Activated CD4-positive, alpha-beta memory T cell treated with anti-CD3 and anti-CD28 coated beads for 36 hours (primary cell): ENCODE measurements at regions of chr11 and their contacts with region 1.

Region 1: GRCh38 chr11:96012086-96012824 is 88.3 kb upstream of the MTMR2 start:
- DNase-seq: peak; percentile 59
- H3K4me3 Mint-ChIP-seq: peak overlapping the region; percentile 32
- H3K27ac Mint-ChIP-seq: peak overlapping the region; percentile 75
- H3K4me1 Mint-ChIP-seq: peaks cover 55% of the 10 kb centered on the region
- H3K27me3 Mint-ChIP-seq: no peaks in the 10 kb centered on the region

Region 2: DNA sequence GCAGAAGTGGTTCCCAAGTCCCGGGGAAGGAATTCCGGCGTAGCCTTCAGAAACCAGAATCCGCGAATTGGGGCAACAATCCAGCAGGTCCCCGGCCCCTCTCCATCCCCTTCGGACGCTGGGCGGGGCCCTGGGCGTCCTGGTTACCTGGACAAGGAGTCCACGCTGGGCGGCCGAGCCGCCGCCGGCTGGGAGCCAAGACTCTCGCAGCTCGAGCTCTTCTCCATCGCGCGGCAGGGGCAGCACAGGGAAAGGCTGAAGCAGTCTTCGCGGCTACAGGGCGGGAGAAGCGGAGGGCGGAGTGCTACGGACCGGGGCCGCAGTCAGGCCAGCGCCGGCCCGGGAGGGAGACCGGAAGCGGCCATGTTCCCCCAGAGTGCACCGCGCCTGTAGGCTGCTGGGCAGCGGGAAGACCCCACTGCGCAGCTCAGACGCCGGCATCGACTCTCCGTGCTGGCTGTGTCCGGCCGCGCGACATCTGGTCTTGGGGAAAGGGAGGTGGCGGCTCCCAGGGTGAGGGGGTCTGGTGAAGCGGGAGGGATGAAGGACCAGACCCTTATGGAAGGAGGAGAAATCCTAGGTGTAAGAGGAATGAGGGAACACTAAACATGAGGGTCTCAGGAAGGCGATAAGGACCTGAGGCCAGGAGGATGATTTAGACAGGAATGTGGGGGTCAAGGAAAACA is 88.4 kb before region 1 on chr11 and contains the start of gene MTMR2:
- CTCF ChIA-PET with region 1: no interaction called
- POLR2A ChIA-PET with region 1: no interaction called
- intact Hi-C with region 1: loop called (anchors 5 kb)
- DNase-seq: peak; percentile 72
- H3K4me3 Mint-ChIP-seq: peak within 1 kb of the TSS; percentile 100
- H3K27ac Mint-ChIP-seq: peak within 1 kb of the TSS; percentile 99
- H3K4me1 Mint-ChIP-seq: peaks cover 30% of the 10 kb centered on the region
- H3K27me3 Mint-ChIP-seq: no peaks in the 10 kb centered on the region
- total RNA-seq, gene MTMR2: 36.9 to 37.8 TPM

Region 3: DNA sequence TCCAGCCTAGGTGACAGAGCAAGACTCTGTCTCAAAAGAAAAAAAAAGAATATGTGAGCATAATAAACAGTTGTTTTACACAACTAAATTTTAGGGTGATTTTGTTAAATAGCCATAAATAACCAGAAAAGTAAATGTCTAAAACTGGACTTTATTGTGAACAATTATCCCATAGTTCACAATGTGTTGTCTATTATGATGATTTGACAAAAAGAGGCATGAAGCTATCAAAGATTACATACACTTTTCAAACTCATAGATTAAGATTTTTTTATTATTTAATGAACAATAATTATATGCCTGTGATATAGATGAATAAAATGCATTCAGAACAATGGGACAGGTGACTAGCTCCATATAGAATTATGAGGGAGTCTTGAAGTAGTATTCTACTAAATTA is 61.4 kb before region 1 on chr11:
- CTCF ChIA-PET with region 1: no interaction called
- POLR2A ChIA-PET with region 1: no interaction called
- intact Hi-C with region 1: no loop called
- DNase-seq: no peak
- H3K4me3 Mint-ChIP-seq: no peak overlapping the region
- H3K27ac Mint-ChIP-seq: no peak overlapping the region
- H3K4me1 Mint-ChIP-seq: no peaks in the 10 kb centered on the region
- H3K27me3 Mint-ChIP-seq: no peaks in the 10 kb centered on the region

Region 4: DNA sequence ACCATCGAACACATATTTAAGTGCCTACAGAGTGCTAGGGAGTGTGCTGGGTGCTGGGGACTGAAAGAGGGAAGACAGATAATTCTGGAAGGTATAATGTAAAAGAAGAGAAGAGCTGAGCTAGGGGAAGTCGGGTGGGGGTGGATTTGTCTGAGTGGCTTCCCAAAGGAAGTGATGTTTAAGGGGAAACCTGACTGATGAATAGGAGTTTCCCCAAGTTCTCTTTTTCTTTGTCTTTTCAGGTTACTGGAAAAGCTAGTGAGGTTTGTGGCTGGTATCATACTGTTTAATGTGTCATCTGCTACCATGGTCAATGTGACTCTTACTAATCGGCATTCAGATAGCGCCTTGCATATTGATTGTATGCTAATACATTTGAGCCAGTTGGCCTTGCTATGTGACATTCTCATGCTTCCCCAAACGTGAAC is 63.3 kb after region 1 on chr11:
- CTCF ChIA-PET with region 1: no interaction called
- POLR2A ChIA-PET with region 1: interaction called, 3 read pairs
- intact Hi-C with region 1: loop called (anchors 1 kb)
- DNase-seq: peak; percentile 53
- H3K4me3 Mint-ChIP-seq: peak overlapping the region; percentile 44
- H3K27ac Mint-ChIP-seq: peak overlapping the region; percentile 85
- H3K4me1 Mint-ChIP-seq: peaks cover 80% of the 10 kb centered on the region
- H3K27me3 Mint-ChIP-seq: no peaks in the 10 kb centered on the region

Region 5: GRCh38 chr11:96188243-96189006 is 176.2 kb after region 1 on chr11:
- CTCF ChIA-PET with region 1: no interaction called
- POLR2A ChIA-PET with region 1: interaction called, 7 read pairs
- intact Hi-C with region 1: loop called (anchors 5 kb)
- DNase-seq: peak; percentile 59
- H3K4me3 Mint-ChIP-seq: peak overlapping the region; percentile 7
- H3K27ac Mint-ChIP-seq: peak overlapping the region; percentile 79
- H3K4me1 Mint-ChIP-seq: peaks cover 74% of the 10 kb centered on the region
- H3K27me3 Mint-ChIP-seq: no peaks in the 10 kb centered on the region

Region 6: DNA sequence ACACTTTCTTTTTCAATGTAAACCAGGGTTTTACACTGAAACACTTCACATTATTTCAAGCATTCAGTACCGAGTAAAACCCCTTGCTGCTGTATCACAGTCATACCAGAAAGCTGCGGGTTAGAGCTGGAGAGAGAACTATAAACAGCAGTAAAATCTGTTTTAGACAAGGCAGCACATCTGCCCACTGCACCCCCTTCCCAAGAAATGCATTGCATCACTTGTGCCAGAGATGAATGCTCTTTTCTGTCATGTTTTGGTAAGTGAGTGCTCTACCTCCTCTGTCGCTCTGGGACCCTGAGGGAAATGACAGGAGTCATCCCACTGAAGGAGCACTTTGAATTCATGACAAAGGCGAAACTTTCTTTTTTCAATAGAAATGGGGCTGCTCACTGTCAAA is 223.5 kb after region 1 on chr11:
- CTCF ChIA-PET with region 1: no interaction called
- POLR2A ChIA-PET with region 1: no interaction called
- intact Hi-C with region 1: loop called (anchors 1 kb)
- DNase-seq: peak; percentile 90
- H3K4me3 Mint-ChIP-seq: peak overlapping the region; percentile 58
- H3K27ac Mint-ChIP-seq: peak overlapping the region; percentile 94
- H3K4me1 Mint-ChIP-seq: peaks cover 50% of the 10 kb centered on the region
- H3K27me3 Mint-ChIP-seq: no peaks in the 10 kb centered on the region

Region 7: GRCh38 chr11:96293598-96294021 is 281.4 kb after region 1 on chr11:
- CTCF ChIA-PET with region 1: no interaction called
- POLR2A ChIA-PET with region 1: no interaction called
- intact Hi-C with region 1: loop called (anchors 5 kb)
- DNase-seq: no peak
- H3K4me3 Mint-ChIP-seq: no peak overlapping the region
- H3K27ac Mint-ChIP-seq: peak overlapping the region; percentile 0
- H3K4me1 Mint-ChIP-seq: peaks cover 71% of the 10 kb centered on the region
- H3K27me3 Mint-ChIP-seq: no peaks in the 10 kb centered on the region